K562 (cell line): ENCODE measurements at regions of chr2 and their contacts with region 1.

Region 1: DNA sequence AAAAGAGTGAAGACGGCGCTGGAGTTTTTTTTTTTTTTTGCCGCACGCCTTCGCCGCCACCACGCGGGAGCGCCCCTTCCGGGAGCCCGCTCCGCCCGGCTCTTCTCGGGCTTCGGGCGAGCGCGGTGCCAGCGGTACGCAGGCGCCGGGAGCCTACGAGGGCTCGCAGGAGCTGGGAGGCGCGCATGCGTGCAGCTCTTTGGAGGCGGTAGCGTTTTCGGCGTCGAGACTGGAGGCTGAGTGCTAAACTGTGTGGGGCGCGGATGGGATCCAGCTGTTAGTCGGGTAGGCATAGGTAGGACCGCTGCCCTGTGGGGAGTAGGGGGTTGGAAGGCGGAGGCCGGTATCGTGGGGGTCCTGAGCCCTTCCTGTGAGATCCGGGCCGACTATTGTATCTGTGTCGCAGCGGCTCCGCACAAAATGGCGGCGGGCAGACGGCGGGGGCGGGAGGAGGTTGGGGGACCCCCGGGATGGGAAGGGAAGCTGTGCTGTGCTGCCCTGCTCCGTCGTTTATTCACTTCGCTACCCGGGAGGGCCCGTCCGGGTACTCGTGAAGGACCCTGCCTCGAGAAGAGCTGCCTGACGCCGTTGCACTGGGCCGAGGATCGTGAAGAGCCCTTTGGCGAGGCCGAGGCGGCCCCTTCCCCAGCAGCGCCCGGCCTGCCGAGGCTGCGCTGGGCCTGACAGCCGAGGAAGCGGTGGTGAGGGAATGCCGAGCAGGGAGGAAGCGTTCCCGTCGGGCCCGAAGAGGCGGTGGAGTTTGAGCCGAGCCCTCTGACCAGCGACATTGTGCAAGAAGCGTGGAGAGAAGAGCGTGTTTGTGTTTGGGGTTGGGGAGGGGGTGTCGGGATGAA is at the start of gene ZNF638:
- DNase-seq: peak; percentile 95 to 97 (median 96)
- ATAC-seq: peak; percentile 97
- H3K4me3 ChIP-seq: peak within 1 kb of the TSS; percentile 98
- H3K27ac ChIP-seq: peak within 1 kb of the TSS; percentile 96
- H3K4me1 ChIP-seq: peaks cover 4 to 8% of the 10 kb centered on the region in 2 experiments; a peak in 3 of 5 replicates
- H3K27me3 ChIP-seq: no peaks in the 10 kb centered on the region
- CTCF ChIP-seq: peak; percentile 68 to 87 (median 83)
- EP300 ChIP-seq: no peak
- POLR2A ChIP-seq: peak; percentile 94
- RAD21 ChIP-seq: peak in 1 of 2 experiments; percentile 42; a peak in 3 of 4 replicates
- polyA plus RNA-seq, gene ZNF638: 53.3 to 57.6 TPM

Region 2: DNA sequence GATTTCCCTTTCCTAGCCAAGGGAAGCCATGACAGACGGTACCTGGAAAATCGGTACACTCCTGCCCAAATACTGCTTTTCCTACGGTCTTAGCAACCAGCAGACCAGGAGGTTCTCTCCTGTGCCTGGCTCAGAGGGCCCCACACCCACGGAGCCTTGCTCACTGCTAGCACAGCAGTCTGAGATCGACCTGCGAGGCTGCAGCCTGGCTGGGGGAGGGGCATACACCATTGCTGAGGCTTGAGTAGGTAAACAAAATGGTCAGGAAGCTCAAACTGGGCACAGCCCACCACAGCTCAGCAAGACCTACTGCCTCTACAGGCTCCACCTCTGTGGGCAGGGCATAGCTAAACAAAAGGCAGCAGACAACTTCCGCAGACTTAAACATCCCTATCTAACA is 489.4 kb before region 1 on chr2:
- CTCF ChIA-PET with region 1: no interaction called
- POLR2A ChIA-PET with region 1: no interaction called
- in situ Hi-C with region 1: no loop called
- intact Hi-C with region 1: no loop called
- DNase-seq: no peak
- ATAC-seq: no peak
- H3K4me3 ChIP-seq: no peak overlapping the region
- H3K27ac ChIP-seq: no peak overlapping the region
- H3K4me1 ChIP-seq: no peaks in the 10 kb centered on the region; a peak in 1 of 5 replicates
- H3K27me3 ChIP-seq: peaks cover 11 to 36% of the 10 kb centered on the region in 2 experiments; a peak in 3 of 5 replicates
- CTCF ChIP-seq: no peak
- EP300 ChIP-seq: no peak
- POLR2A ChIP-seq: no peak
- RAD21 ChIP-seq: no peak

Region 3: GRCh38 chr2:71347517-71347916 is 15.7 kb after region 1 on chr2:
- CTCF ChIA-PET with region 1: no interaction called
- POLR2A ChIA-PET with region 1: interaction called, 24 read pairs
- in situ Hi-C with region 1: no loop called
- intact Hi-C with region 1: no loop called
- DNase-seq: peak in 3 of 4 experiments; percentile 11 to 30 (median 26)
- ATAC-seq: peak; percentile 32; the same call in 1 of the 3 replicates
- H3K4me3 ChIP-seq: no peak overlapping the region
- H3K27ac ChIP-seq: no peak overlapping the region
- H3K4me1 ChIP-seq: no peaks in the 10 kb centered on the region
- H3K27me3 ChIP-seq: no peaks in the 10 kb centered on the region
- CTCF ChIP-seq: no peak
- EP300 ChIP-seq: no peak
- POLR2A ChIP-seq: no peak
- RAD21 ChIP-seq: no peak